ENCODE measurements at regions of chr1 and their contacts with region 1.

Region 1: DNA sequence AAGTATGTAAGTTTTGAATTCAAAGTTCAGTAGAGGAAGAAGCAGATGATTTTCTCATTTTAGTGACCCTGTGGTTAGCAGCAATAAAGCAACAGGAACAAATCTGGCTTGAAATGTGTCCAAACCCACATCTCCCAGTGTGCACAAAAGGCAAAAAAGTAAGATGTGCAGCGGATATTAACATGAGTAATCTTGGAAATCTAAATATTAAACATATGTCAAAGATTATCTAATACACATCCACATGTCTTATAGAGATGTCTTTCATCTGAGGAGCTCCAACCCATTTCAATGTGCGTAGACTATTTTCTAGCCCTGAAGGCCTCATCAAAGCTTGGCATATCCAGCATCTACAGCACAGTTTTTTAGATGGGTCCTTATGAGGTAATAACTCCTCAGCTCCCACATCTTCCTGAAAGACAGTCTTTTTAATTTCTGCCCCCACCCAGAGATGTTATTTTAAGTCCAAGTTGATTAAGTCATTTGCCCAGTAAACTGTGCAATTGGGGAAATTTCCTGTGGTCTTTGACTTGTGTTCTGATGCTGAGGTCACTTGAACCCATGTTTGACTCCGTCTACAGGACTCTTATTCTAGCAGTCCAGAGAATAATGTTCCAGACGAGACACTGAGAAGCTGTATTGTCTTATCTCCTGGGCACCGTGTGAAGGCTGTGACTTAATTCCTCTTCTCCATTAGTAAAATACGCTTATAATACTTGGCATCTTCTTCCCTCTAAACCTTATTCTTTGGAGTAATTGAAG is 73.7 kb downstream of the LMO4 start:
- DNase-seq: no peak
- ATAC-seq: no peak
- H3K4me3 Mint-ChIP-seq: no peak overlapping the region
- H3K27ac Mint-ChIP-seq: no peak overlapping the region
- H3K4me1 Mint-ChIP-seq: peaks cover 17% of the 10 kb centered on the region
- H3K27me3 Mint-ChIP-seq: peaks cover 10% of the 10 kb centered on the region
- CTCF ChIP-seq: no peak

Region 2: GRCh38 chr1:87335175-87335884 is 67.1 kb before region 1 on chr1:
- CTCF ChIA-PET with region 1: interaction called, 10 read pairs
- POLR2A ChIA-PET with region 1: no interaction called
- intact Hi-C with region 1: no loop called
- DNase-seq: peak; percentile 80
- ATAC-seq: peak; percentile 61
- H3K4me3 Mint-ChIP-seq: peak overlapping the region; percentile 87
- H3K27ac Mint-ChIP-seq: peak overlapping the region; percentile 94
- H3K4me1 Mint-ChIP-seq: peaks cover 66% of the 10 kb centered on the region
- H3K27me3 Mint-ChIP-seq: peaks cover 2% of the 10 kb centered on the region
- CTCF ChIP-seq: no peak

Measured in activated CD8-positive, alpha-beta T cell treated with anti-CD3 and anti-CD28 coated beads for 36 hours (primary cell).